Activated naive CD4-positive, alpha-beta T cell treated with anti-CD3 and anti-CD28 coated beads for 36 hours (primary cell): ENCODE measurements at regions of chr17 and their contacts with region 1.

Region 1: DNA sequence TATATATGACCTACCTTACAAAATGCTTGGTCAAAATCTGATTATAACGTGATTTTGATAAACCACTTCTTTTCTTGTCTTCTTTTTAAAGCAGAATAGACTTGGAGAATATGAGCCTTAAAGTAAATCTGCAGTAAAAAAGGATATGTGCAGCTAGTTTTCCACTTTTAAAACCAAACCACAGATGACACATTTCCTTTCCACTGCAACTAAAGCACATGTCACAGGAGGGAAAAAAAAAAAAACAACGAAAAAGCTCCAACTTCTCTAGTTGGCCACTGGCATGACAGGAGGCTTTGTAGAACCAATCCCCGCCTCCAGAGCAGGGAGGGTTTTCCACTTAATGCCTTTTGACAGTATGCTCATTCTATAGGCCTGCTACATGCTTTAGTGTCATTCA is at the start of gene EVI2A:
- DNase-seq: peak; percentile 89
- H3K4me3 Mint-ChIP-seq: peak within 1 kb of the TSS; percentile 76
- H3K27ac Mint-ChIP-seq: peak within 1 kb of the TSS; percentile 96
- H3K4me1 Mint-ChIP-seq: peaks cover 28% of the 10 kb centered on the region
- H3K27me3 Mint-ChIP-seq: no peaks in the 10 kb centered on the region
- total RNA-seq, gene EVI2A: 22.0 to 22.5 TPM

Region 2: DNA sequence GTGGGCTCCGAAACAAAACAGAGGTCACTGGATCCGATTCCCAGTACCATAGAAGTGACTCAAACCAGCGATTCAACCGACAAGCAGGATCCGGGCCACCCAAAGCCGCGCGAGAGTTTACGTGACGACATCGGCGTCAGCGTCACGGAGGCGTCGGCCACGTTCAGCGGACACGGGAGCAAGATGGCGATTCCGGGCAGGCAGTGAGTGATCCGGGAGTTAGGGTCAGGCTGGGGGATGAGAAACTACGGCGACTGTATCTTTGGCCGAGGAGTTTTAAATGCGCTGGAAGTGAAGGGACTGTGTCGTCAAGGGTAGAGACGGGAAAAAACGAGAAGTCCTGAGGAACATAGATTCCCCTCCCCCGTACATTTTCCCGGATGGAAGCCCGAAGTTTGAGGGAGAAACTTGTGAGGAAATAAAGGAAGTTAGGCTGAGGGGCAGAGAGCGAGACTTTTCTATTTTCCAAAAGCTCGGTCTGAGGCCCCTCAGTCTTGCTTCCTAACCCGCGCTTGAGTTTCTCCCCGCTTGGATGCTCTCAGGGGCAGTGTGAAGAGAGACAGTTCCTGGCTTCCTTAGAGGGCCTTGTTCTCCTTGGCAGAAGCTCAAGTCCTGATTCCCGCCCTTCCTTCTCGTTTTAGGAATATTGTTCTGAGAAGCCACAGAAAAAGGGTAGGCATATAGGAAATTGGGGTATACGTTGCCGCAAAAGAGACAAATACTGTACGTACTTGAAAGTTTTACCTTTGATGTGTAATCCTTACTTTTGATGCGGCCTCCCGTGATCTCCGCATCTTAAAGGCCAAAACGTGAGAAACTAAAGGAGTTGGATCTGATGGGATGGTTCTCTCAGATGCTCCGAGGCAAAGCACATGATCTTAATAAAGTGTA is 1204.6 kb before region 1 on chr17 and contains the start of gene NSRP1:
- CTCF ChIA-PET with region 1: no interaction called
- intact Hi-C with region 1: loop called (anchors 10 kb)
- DNase-seq: peak; percentile 98
- H3K4me3 Mint-ChIP-seq: peak within 1 kb of the TSS; percentile 97
- H3K27ac Mint-ChIP-seq: peak within 1 kb of the TSS; percentile 99
- H3K4me1 Mint-ChIP-seq: peaks cover 48% of the 10 kb centered on the region
- H3K27me3 Mint-ChIP-seq: no peaks in the 10 kb centered on the region
- total RNA-seq, gene NSRP1: 21.4 to 21.5 TPM

Region 3: GRCh38 chr17:30824356-30825145 is 496.9 kb before region 1 on chr17 and contains the start of gene CRLF3:
- CTCF ChIA-PET with region 1: no interaction called
- intact Hi-C with region 1: loop called (anchors 5 kb)
- DNase-seq: peak; percentile 91
- H3K4me3 Mint-ChIP-seq: peak within 1 kb of the TSS; percentile 85
- H3K27ac Mint-ChIP-seq: peak within 1 kb of the TSS; percentile 94
- H3K4me1 Mint-ChIP-seq: peaks cover 39% of the 10 kb centered on the region
- H3K27me3 Mint-ChIP-seq: no peaks in the 10 kb centered on the region
- total RNA-seq, gene CRLF3: 47.1 to 47.7 TPM

Region 4: GRCh38 chr17:31094600-31095238 is 226.8 kb before region 1 on chr17 and contains the start of gene NF1:
- CTCF ChIA-PET with region 1: no interaction called
- intact Hi-C with region 1: loop called (anchors 5 kb)
- DNase-seq: peak; percentile 92
- H3K4me3 Mint-ChIP-seq: peak within 1 kb of the TSS; percentile 94
- H3K27ac Mint-ChIP-seq: peak within 1 kb of the TSS; percentile 72
- H3K4me1 Mint-ChIP-seq: peaks cover 11% of the 10 kb centered on the region
- H3K27me3 Mint-ChIP-seq: no peaks in the 10 kb centered on the region
- total RNA-seq, gene NF1: 19.5 to 22.8 TPM

Region 5: DNA sequence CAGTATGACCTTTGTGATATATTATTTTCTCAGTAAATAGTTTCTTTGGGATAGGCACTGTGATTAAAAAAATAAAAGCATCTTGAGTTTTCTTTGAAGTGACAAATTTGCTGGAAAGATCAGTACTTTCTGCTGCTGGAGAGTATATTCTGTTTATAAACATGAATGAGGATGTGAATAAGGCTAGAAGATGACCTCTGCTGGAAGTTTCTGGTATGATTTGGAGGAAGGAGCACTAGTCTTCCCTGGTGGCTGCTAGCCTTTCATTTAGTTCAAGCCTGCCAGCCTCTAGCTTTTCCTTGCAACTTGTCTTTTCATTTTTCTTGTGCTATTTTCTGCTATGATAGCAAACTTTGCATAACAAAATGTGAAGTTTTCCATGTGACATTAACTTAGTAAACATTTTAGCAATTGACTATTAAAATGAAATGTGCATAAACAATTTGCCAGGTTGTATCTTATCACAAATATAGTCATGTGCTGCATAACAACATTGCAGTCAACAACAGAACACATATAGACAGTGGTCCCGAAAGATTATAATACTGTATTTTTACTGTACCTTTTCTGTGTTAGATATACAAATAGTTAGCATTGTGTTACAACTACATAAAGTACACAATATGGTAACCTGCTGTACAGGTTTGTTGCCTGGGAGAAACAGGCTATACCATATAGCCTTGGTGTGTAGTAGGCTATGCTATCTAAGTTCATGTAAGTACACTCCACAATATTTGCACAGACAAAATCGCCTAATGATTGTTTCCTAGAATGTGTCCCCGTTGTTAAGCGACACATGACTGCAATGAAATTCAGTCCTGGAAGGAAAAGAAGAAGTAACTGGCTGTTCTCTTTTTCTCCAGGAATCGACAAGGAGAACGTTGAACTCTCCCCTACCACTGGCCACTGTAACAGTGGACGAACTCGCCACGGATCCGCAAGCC is 51.9 kb after region 1 on chr17:
- CTCF ChIA-PET with region 1: interaction called, 3 read pairs
- intact Hi-C with region 1: loop called (anchors 2 kb)
- DNase-seq: peak; percentile 34
- H3K4me3 Mint-ChIP-seq: no peak overlapping the region
- H3K27ac Mint-ChIP-seq: no peak overlapping the region
- H3K4me1 Mint-ChIP-seq: peaks cover 24% of the 10 kb centered on the region
- H3K27me3 Mint-ChIP-seq: no peaks in the 10 kb centered on the region

Region 6: DNA sequence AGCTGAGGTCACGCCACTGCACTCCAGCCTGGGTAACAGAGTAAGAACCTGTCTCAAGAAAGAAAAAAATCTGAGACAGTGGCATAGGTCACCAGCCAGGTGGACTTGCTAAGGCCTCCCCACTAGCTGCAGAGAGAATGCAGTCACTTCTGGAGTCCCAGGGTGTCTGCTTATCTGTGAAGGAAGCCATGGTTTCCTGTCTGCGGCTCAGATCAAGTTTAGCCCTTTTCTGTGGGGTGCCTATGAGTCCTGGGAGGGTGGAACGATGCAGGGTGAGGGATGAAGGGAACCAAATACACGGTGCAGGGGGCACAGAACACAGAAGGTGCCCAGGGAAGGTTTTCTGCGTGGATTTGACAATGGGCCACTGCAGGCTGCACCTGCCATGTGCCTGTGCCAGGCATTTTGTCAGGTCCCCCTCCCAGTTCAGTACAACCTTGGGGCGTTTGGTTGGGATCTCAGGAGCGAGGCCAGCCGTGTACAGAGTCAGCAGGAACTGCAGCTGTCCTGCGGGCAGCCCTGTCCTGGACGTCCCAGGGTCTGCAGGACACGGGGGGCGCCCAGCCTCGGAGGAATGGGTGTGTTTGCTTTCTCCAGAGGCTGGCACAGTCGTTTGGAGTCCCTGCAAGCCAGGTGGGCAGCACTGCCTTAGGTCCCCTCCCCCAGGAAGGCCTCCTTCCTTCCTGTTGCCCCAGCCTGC is 111.8 kb after region 1 on chr17:
- CTCF ChIA-PET with region 1: no interaction called
- intact Hi-C with region 1: no loop called
- DNase-seq: peak; percentile 45
- H3K4me3 Mint-ChIP-seq: no peak overlapping the region
- H3K27ac Mint-ChIP-seq: no peak overlapping the region
- H3K4me1 Mint-ChIP-seq: peaks cover 13% of the 10 kb centered on the region
- H3K27me3 Mint-ChIP-seq: no peaks in the 10 kb centered on the region

Region 7: DNA sequence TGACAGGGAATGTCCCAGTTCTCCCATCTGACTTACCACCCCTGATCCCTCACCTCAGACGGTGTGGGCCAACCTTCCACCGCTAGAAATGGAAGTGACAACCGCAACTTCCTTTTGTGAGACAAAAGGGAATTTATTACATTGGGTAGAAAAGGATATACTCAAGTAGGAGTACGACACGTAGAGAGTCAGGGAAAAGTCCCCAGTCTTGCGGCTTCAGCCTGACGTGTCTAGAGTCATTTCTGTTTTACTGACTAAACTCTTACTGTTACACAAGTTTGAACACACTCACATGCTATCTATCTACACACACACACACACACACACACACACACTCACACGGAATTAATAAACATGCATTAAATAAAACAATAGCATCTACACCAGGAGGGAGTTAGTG is 358.6 kb after region 1 on chr17:
- CTCF ChIA-PET with region 1: no interaction called
- intact Hi-C with region 1: loop called (anchors 2 kb)
- DNase-seq: peak; percentile 92
- H3K4me3 Mint-ChIP-seq: peak overlapping the region; percentile 44
- H3K27ac Mint-ChIP-seq: peak overlapping the region; percentile 76
- H3K4me1 Mint-ChIP-seq: peaks cover 13% of the 10 kb centered on the region
- H3K27me3 Mint-ChIP-seq: peaks cover 38% of the 10 kb centered on the region

Region 8: GRCh38 chr17:32111141-32111771 is 789.8 kb after region 1 on chr17:
- CTCF ChIA-PET with region 1: no interaction called
- intact Hi-C with region 1: loop called (anchors 5 kb)
- DNase-seq: peak; percentile 71
- H3K4me3 Mint-ChIP-seq: no peak overlapping the region
- H3K27ac Mint-ChIP-seq: no peak overlapping the region
- H3K4me1 Mint-ChIP-seq: peaks cover 18% of the 10 kb centered on the region
- H3K27me3 Mint-ChIP-seq: no peaks in the 10 kb centered on the region